Activated CD4-positive, alpha-beta memory T cell treated with anti-CD3 and anti-CD28 coated beads for 36 hours (primary cell): ENCODE measurements at regions of chr12 and their contacts with region 1.

Region 1: DNA sequence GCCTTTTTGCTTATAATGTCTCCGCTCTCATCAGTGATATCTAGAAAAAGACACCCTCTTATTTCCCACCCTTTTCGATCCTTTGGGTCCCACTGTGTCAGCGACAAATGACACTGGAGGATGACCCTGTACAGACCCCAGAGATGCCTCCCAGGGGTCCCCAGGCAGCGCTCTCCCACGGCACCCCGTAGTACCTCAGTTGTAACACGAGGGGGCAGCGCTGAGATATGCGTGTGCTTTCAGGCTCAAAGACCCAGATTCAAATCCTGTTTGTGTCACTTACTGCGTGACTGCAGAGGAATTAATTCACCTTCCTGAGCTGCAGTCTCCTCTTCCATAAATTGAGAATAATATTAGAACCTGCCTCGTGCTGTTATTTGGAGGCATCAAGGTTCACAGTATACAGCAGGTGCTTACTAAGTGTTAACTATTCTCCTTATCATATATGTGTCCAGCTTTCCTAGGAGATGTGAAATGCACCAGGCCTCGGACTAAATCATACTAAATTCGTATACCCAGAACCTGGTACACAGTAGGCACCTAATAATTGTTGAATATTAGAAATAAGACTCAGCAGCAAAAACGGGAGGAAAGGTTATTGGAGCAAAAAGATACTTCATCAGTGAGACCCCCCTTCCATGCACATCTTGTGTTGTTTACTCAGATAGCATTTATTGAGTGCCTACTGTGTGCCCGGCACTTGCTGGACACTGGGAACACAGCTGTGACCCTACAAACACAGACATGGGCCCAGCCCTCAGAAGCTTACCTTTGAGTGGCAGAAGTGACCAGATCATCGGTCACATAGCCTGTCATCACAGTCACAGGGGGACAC is 99.9 kb downstream of the PHETA1 start:
- DNase-seq: peak; percentile 26
- H3K4me3 Mint-ChIP-seq: no peak overlapping the region
- H3K27ac Mint-ChIP-seq: no peak overlapping the region
- H3K4me1 Mint-ChIP-seq: no peaks in the 10 kb centered on the region
- H3K27me3 Mint-ChIP-seq: no peaks in the 10 kb centered on the region

Region 2: GRCh38 chr12:110750784-110751461 is 518.0 kb before region 1 on chr12:
- CTCF ChIA-PET with region 1: no interaction called
- POLR2A ChIA-PET with region 1: no interaction called
- intact Hi-C with region 1: no loop called
- DNase-seq: no peak
- H3K4me3 Mint-ChIP-seq: no peak overlapping the region
- H3K27ac Mint-ChIP-seq: no peak overlapping the region
- H3K4me1 Mint-ChIP-seq: no peaks in the 10 kb centered on the region
- H3K27me3 Mint-ChIP-seq: no peaks in the 10 kb centered on the region

Region 3: DNA sequence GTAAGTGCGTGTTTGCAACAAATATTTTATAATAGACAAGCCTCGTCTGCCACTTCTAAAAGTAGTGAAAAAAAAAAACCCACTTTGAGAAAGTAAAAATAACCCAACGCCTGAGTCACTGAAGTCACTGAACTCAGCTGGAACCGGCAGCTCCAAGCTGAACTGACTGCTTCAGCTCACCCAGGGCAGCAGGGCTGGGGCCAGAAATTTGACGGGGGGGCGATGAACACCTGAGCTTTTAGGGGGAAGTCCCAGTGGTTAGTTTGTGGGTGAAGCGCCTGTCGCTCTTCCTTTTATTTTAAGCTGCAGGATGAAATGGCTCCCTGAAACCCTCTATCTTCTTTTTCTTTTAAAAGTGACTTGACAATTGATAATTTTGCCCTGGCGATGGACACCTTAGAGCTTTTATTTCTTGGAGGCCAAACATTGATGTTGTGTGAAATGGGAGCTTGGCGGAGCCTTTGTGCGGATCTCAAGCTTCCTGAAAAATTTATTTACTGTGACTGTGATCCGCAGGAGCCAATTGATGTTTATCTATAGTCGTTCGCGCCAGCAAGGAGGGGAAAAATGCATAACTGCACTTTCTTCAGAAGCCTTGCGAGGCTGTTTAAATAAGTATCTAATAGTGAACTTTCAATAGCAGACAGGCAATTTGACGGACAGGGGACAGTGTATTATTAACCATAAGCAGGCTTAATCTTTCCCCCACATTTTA is 175.4 kb before region 1 on chr12:
- CTCF ChIA-PET with region 1: no interaction called
- POLR2A ChIA-PET with region 1: no interaction called
- intact Hi-C with region 1: no loop called
- DNase-seq: peak; percentile 37
- H3K4me3 Mint-ChIP-seq: no peak overlapping the region
- H3K27ac Mint-ChIP-seq: no peak overlapping the region
- H3K4me1 Mint-ChIP-seq: peaks cover 12% of the 10 kb centered on the region
- H3K27me3 Mint-ChIP-seq: no peaks in the 10 kb centered on the region

Region 4: GRCh38 chr12:111285200-111285599 is 16.2 kb after region 1 on chr12:
- CTCF ChIA-PET with region 1: no interaction called
- POLR2A ChIA-PET with region 1: no interaction called
- intact Hi-C with region 1: no loop called
- DNase-seq: no peak
- H3K4me3 Mint-ChIP-seq: no peak overlapping the region
- H3K27ac Mint-ChIP-seq: no peak overlapping the region
- H3K4me1 Mint-ChIP-seq: no peaks in the 10 kb centered on the region
- H3K27me3 Mint-ChIP-seq: peaks cover 10% of the 10 kb centered on the region

Region 5: GRCh38 chr12:111298582-111299436 is 29.9 kb after region 1 on chr12:
- CTCF ChIA-PET with region 1: interaction called, 11 read pairs
- POLR2A ChIA-PET with region 1: no interaction called
- intact Hi-C with region 1: no loop called
- DNase-seq: peak; percentile 58
- H3K4me3 Mint-ChIP-seq: no peak overlapping the region
- H3K27ac Mint-ChIP-seq: no peak overlapping the region
- H3K4me1 Mint-ChIP-seq: no peaks in the 10 kb centered on the region
- H3K27me3 Mint-ChIP-seq: no peaks in the 10 kb centered on the region

Region 6: GRCh38 chr12:111313833-111314259 is 44.9 kb after region 1 on chr12:
- CTCF ChIA-PET with region 1: interaction called, 9 read pairs
- POLR2A ChIA-PET with region 1: no interaction called
- intact Hi-C with region 1: loop called (anchors 5 kb)
- DNase-seq: peak; percentile 77
- H3K4me3 Mint-ChIP-seq: no peak overlapping the region
- H3K27ac Mint-ChIP-seq: no peak overlapping the region
- H3K4me1 Mint-ChIP-seq: no peaks in the 10 kb centered on the region
- H3K27me3 Mint-ChIP-seq: peaks cover 11% of the 10 kb centered on the region

Region 7: GRCh38 chr12:111705672-111706071 is 436.7 kb after region 1 on chr12:
- CTCF ChIA-PET with region 1: no interaction called
- POLR2A ChIA-PET with region 1: no interaction called
- intact Hi-C with region 1: no loop called
- DNase-seq: no peak
- H3K4me3 Mint-ChIP-seq: no peak overlapping the region
- H3K27ac Mint-ChIP-seq: no peak overlapping the region
- H3K4me1 Mint-ChIP-seq: no peaks in the 10 kb centered on the region
- H3K27me3 Mint-ChIP-seq: no peaks in the 10 kb centered on the region